IMR-90 (cell line): ENCODE measurements at regions of chr22 and their contacts with region 1.

Region 1: GRCh38 chr22:40844951-40845350 is 11.5 kb downstream of the ST13 start:
- DNase-seq: no peak
- ATAC-seq: no peak
- H3K4me3 ChIP-seq: no peak overlapping the region
- H3K27ac ChIP-seq: no peak overlapping the region
- H3K4me1 ChIP-seq: peaks cover 2% of the 10 kb centered on the region; the same call in 1 of the 2 replicates
- H3K27me3 ChIP-seq: no peaks in the 10 kb centered on the region
- CTCF ChIP-seq: no peak
- POLR2A ChIP-seq: no peak
- RAD21 ChIP-seq: no peak

Region 2: DNA sequence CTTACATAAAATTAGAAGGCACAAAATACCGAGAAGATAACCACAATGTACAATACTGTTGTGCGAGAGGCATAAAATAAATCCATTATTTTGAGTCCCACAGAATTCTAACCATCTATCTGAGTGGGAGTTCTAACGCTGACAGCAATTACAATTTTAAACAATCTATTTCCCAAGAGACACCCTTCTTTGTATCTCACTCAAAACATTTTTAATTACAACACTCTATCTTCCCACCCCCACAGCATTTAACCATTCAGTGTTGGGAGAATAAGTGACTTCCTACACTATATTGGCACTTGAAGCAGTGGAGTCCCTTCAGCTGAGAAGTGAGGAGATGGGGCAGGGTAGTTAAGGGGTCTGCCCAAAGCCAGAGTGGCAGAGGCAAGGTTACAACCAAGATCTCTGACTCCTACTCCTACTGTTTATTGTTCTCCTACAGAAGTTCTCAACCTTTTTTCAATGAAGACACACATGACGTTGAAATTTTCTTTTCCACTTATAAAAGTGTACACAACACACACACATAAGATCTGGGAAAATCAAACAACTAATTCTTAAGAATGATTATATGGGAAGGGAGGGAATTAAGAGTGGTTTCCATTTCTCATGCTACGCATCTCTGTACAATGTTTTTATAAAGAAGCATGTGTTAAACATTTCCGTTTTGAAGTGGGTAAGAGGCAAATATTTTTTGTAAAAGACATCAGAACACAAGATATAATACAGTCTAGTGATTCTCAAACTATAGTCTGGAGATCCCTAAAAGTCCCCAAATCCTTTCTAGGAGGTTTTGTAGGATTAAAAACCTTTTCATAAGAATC is 36.7 kb before region 1 on chr22:
- CTCF ChIA-PET with region 1: no interaction called
- POLR2A ChIA-PET with region 1: no interaction called
- dilution Hi-C with region 1: no loop called
- in situ Hi-C with region 1: no loop called
- intact Hi-C with region 1: no loop called
- DNase-seq: peak; percentile 16
- ATAC-seq: no peak; the same call in 1 of the 2 replicates
- H3K4me3 ChIP-seq: no peak overlapping the region
- H3K27ac ChIP-seq: no peak overlapping the region
- H3K4me1 ChIP-seq: peaks cover 6% of the 10 kb centered on the region
- H3K27me3 ChIP-seq: no peaks in the 10 kb centered on the region
- CTCF ChIP-seq: no peak
- POLR2A ChIP-seq: no peak
- RAD21 ChIP-seq: no peak

Region 3: GRCh38 chr22:40829131-40829530 is 15.8 kb before region 1 on chr22:
- CTCF ChIA-PET with region 1: no interaction called
- POLR2A ChIA-PET with region 1: no interaction called
- dilution Hi-C with region 1: no loop called
- in situ Hi-C with region 1: no loop called
- intact Hi-C with region 1: no loop called
- DNase-seq: no peak
- ATAC-seq: no peak
- H3K4me3 ChIP-seq: no peak overlapping the region
- H3K27ac ChIP-seq: no peak overlapping the region
- H3K4me1 ChIP-seq: no peaks in the 10 kb centered on the region
- H3K27me3 ChIP-seq: no peaks in the 10 kb centered on the region
- CTCF ChIP-seq: no peak
- POLR2A ChIP-seq: no peak
- RAD21 ChIP-seq: no peak

Region 4: DNA sequence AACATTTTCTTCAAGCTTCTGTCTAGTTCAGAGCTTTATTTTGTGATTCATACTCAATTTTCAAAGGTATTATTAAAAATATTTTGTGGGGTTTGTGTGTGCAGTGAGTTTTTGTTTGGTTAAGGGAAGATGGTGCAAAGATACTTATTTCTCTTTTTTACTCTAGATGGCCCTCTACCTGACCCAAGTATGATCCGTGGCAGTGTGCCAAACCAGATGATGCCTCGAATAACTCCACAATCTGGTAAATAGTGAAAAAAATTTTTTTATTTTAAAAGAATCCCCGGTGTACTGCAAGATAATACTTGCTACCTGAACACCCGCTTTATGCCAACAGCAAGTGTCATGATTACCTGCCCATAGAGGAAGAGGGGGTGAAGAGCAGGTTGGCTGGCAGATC is 301.6 kb after region 1 on chr22:
- CTCF ChIA-PET with region 1: no interaction called
- POLR2A ChIA-PET with region 1: no interaction called
- dilution Hi-C with region 1: no loop called
- in situ Hi-C with region 1: no loop called
- intact Hi-C with region 1: loop called (anchors 10 kb)
- DNase-seq: no peak
- ATAC-seq: no peak
- H3K4me3 ChIP-seq: no peak overlapping the region
- H3K27ac ChIP-seq: no peak overlapping the region
- H3K4me1 ChIP-seq: no peaks in the 10 kb centered on the region
- H3K27me3 ChIP-seq: no peaks in the 10 kb centered on the region
- CTCF ChIP-seq: no peak
- POLR2A ChIP-seq: no peak
- RAD21 ChIP-seq: no peak